CD8-positive, alpha-beta T cell (primary cell): ENCODE measurements at regions of chr22 and their contacts with region 1.

Region 1: DNA sequence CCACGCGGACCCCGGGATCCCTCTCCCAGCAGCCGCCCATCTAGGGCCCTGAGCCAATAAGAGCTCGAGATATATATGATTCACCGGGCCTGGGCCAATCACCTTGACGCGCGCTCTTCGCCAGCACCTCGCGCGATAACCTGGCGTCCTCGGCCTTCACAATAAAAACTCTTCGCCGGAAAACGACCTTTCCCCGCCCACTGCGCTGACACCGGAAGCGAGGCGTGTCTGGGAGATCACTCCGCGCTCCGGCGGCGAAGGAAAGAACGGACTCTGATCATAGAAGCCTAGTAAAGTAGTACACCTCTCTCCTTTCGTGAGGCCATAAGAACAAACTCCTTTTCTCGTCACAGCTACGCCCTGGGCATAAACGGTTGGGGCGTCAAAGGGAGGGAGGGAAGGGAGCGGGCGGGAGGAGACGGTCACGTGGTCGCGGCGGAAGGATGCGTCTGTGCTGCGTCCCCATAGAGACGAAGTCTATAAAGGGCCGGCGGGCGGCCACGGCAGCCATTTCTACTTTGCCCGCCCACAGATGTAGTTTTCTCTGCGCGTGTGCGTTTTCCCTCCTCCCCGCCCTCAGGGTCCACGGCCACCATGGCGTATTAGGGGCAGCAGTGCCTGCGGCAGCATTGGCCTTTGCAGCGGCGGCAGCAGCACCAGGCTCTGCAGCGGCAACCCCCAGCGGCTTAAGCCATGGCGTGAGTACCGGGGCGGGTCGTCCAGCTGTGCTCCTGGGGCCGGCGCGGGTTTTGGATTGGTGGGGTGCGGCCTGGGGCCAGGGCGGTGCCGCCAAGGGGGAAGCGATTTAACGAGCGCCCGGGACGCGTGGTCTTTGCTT is at the start of gene ATF4:
- DNase-seq: peak; percentile 93 to 99 (median 95)
- ATAC-seq: peak; percentile 89
- H3K4me3 ChIP-seq: peak within 1 kb of the TSS; percentile 98 to 99
- H3K4me3 Mint-ChIP-seq: peak within 1 kb of the TSS; percentile 98
- H3K27ac ChIP-seq: peak within 1 kb of the TSS; percentile 87 to 88
- H3K27ac Mint-ChIP-seq: peak within 1 kb of the TSS; percentile 99
- H3K4me1 ChIP-seq: peaks cover 48% of the 10 kb centered on the region
- H3K4me1 Mint-ChIP-seq: peaks cover 44% of the 10 kb centered on the region
- H3K27me3 ChIP-seq: no peaks in the 10 kb centered on the region
- H3K27me3 Mint-ChIP-seq: no peaks in the 10 kb centered on the region
- CTCF ChIP-seq: no peak
- total RNA-seq, gene ATF4: 327 to 329 TPM

Region 2: DNA sequence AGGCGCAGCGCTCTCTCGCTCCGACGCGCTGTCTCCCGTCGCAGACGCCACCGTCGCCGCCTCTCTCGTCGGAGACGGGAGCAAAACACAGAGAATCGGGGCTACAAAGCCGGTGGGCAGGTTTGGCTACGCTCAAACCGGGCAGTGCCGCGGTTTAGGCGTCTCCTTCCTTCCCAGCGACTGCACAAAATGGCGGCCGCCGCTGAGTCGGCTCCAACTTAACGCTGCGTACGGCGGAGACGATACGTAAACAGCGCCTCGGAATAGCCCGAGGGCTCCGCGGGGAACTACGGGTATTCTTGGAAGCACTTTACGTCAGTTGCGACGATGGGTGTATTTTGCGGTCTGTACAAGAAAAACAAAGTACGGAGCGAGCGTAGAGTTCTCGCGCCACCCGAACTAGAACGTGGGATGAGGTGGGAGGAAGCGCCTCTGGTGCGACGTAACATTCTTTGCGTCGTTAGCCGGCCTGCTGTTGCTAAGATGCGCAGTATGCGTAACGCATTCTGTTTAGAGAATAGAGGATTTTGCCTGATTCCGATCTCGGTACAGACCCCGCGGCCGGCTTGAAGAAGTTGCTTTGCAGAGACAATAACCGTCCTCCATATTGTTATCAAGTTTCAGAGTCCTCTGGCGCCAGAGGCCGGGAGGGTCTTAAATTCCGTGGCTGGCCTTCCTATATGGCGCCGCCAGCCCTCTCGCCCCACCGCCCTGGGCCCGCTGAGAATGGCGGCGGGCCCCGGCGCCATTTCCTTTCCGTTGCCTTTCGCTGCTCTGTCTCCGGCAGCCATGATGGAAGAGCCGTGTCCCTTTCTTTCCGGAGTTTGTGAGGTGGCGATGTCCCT is 1013.9 kb before region 1 on chr22 and contains the start of gene DDX17:
- CTCF ChIA-PET with region 1: no interaction called
- POLR2A ChIA-PET with region 1: interaction called, 4 read pairs
- intact Hi-C with region 1: loop called in 1 of 2 experiments (anchors 10 kb)
- DNase-seq: peak; percentile 91 to 99 (median 95)
- ATAC-seq: peak; percentile 89
- H3K4me3 ChIP-seq: peak within 1 kb of the TSS; percentile 83 to 91
- H3K4me3 Mint-ChIP-seq: peak within 1 kb of the TSS; percentile 98
- H3K27ac ChIP-seq: peak within 1 kb of the TSS; percentile 97 to 99
- H3K27ac Mint-ChIP-seq: peak within 1 kb of the TSS; percentile 100
- H3K4me1 ChIP-seq: peaks cover 38% of the 10 kb centered on the region
- H3K4me1 Mint-ChIP-seq: peaks cover 46% of the 10 kb centered on the region
- H3K27me3 ChIP-seq: no peaks in the 10 kb centered on the region
- H3K27me3 Mint-ChIP-seq: no peaks in the 10 kb centered on the region
- CTCF ChIP-seq: no peak
- total RNA-seq, gene DDX17: 348 to 386 TPM

Region 3: DNA sequence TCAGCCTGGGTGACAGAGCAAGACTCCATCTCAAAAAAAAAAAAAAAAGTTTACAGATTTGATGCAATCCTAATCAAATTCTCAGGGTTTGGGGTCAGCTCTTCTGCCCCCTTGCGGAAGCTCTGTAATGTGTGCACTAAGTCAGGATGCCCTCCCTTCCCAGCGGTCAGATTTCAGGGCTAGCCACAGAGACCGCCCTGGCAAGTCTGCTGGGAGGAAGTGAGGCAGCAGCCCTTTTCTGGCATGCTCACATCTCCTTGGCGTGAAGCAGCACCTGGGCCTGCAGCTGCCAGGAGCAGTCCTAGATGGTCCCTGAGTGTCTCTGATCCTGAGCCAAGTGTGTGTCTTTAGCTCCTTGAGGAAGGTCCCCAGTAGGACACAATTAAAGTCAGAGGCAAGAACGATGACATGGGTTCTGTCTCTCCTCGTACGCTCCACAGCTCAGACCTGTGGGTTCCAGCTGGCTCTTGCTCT is 517.1 kb before region 1 on chr22:
- CTCF ChIA-PET with region 1: no interaction called
- POLR2A ChIA-PET with region 1: no interaction called
- intact Hi-C with region 1: loop called in 1 of 2 experiments (anchors 10 kb)
- DNase-seq: peak; percentile 43 to 92 (median 76)
- ATAC-seq: peak; percentile 83
- H3K4me3 ChIP-seq: no peak overlapping the region
- H3K4me3 Mint-ChIP-seq: no peak overlapping the region
- H3K27ac ChIP-seq: no peak overlapping the region
- H3K27ac Mint-ChIP-seq: peak overlapping the region; percentile 27
- H3K4me1 ChIP-seq: peaks cover 10% of the 10 kb centered on the region
- H3K4me1 Mint-ChIP-seq: peaks cover 12% of the 10 kb centered on the region
- H3K27me3 ChIP-seq: no peaks in the 10 kb centered on the region
- H3K27me3 Mint-ChIP-seq: peaks cover under 1% of the 10 kb centered on the region
- CTCF ChIP-seq: peak; percentile 68

Region 4: DNA sequence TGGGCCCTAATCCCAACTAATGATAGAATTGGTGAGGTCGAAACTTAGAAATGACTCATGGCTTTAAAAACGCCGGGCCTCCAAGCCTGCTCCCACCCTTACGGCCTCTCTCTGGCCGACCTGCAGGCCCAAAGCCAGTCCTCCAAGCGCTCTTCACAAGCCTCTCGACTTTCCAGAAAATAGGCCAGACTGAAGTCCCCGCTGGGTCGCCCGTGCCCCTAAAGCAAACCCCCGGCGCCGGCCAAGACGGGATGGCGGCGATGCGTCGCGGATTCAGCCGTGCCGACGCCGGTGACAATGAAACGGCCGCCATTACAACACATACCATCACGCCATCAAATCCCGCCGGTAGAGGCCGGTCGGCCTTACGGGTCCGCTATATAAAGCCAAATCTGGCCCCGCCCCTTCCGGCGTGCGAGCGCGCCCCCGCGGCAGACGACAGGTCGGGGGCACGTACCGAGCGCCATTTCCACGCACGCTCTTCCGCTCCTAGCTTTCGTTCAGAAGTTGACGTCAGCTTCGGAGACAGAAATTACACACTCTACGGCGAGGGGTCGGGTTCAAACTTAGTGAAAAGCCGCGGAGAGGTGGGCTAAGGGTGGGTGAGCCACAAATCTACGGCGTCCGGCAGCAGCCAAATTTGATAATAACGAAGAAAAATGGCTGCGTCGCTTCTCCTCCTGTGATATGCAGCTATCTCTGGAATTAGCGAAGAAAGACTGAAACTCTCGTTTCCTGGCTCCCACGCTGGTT is 200.8 kb before region 1 on chr22 and contains the start of gene RPL3:
- CTCF ChIA-PET with region 1: no interaction called
- POLR2A ChIA-PET with region 1: interaction called, 17 read pairs
- intact Hi-C with region 1: loop called (anchors 1 kb)
- DNase-seq: peak; percentile 96 to 100 (median 98)
- ATAC-seq: peak; percentile 85
- H3K4me3 ChIP-seq: peak within 1 kb of the TSS; percentile 91 to 99
- H3K4me3 Mint-ChIP-seq: peak within 1 kb of the TSS; percentile 96
- H3K27ac ChIP-seq: peak within 1 kb of the TSS; percentile 81 to 90
- H3K27ac Mint-ChIP-seq: peak within 1 kb of the TSS; percentile 96
- H3K4me1 ChIP-seq: peaks cover 45% of the 10 kb centered on the region
- H3K4me1 Mint-ChIP-seq: peaks cover 46% of the 10 kb centered on the region
- H3K27me3 ChIP-seq: no peaks in the 10 kb centered on the region
- H3K27me3 Mint-ChIP-seq: no peaks in the 10 kb centered on the region
- CTCF ChIP-seq: no peak
- total RNA-seq, gene RPL3: 3,777 to 3,874 TPM

Region 5: GRCh38 chr22:39414886-39415285 is 105.4 kb before region 1 on chr22:
- CTCF ChIA-PET with region 1: interaction called, 3 read pairs
- POLR2A ChIA-PET with region 1: interaction called, 3 read pairs
- intact Hi-C with region 1: loop called in 1 of 2 experiments (anchors 5 kb)
- DNase-seq: no peak
- ATAC-seq: no peak
- H3K4me3 ChIP-seq: peak overlapping the region; percentile 0 to 17
- H3K4me3 Mint-ChIP-seq: peak overlapping the region; percentile 63
- H3K27ac ChIP-seq: no peak overlapping the region
- H3K27ac Mint-ChIP-seq: peak overlapping the region; percentile 75
- H3K4me1 ChIP-seq: peaks cover 68% of the 10 kb centered on the region
- H3K4me1 Mint-ChIP-seq: peaks cover 62% of the 10 kb centered on the region
- H3K27me3 ChIP-seq: no peaks in the 10 kb centered on the region
- H3K27me3 Mint-ChIP-seq: no peaks in the 10 kb centered on the region
- CTCF ChIP-seq: no peak

Region 6: GRCh38 chr22:39502109-39502788 is 18.0 kb before region 1 on chr22 and contains the start of gene MIEF1:
- CTCF ChIA-PET with region 1: interaction called, 287 read pairs
- POLR2A ChIA-PET with region 1: interaction called, 20 read pairs
- intact Hi-C with region 1: loop called (anchors 1 kb)
- DNase-seq: peak; percentile 67 to 96 (median 88)
- ATAC-seq: peak; percentile 94
- H3K4me3 ChIP-seq: peak within 1 kb of the TSS; percentile 66 to 80
- H3K4me3 Mint-ChIP-seq: peak within 1 kb of the TSS; percentile 97
- H3K27ac ChIP-seq: peak within 1 kb of the TSS; percentile 64 to 80
- H3K27ac Mint-ChIP-seq: peak within 1 kb of the TSS; percentile 92
- H3K4me1 ChIP-seq: peaks cover 30% of the 10 kb centered on the region
- H3K4me1 Mint-ChIP-seq: peaks cover 41% of the 10 kb centered on the region
- H3K27me3 ChIP-seq: no peaks in the 10 kb centered on the region
- H3K27me3 Mint-ChIP-seq: no peaks in the 10 kb centered on the region
- CTCF ChIP-seq: no peak
- total RNA-seq, gene MIEF1: 24.8 to 25.3 TPM

Region 7: DNA sequence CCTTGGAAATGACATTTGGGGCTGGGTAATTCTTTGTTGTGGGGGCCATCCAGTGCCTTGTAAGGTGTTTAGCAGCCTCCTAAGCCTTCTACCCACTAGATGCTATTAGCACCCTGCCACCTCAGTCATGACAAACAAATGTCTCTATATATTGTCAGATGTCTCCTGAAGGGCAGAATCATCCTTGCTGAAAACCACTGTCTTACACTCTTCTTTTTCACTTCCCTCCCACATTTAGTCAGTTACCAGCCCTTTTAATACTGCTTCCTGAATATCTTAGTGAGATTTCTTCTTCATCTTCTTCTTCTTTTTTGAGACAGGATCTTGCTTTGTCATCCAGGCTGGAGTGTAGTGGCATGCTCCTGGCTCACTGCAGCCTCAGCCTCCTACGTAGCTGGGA is 690.5 kb after region 1 on chr22:
- CTCF ChIA-PET with region 1: no interaction called
- POLR2A ChIA-PET with region 1: no interaction called
- intact Hi-C with region 1: no loop called
- DNase-seq: peak in 1 of 9 experiments; percentile 26
- ATAC-seq: peak; percentile 51
- H3K4me3 ChIP-seq: no peak overlapping the region
- H3K4me3 Mint-ChIP-seq: peak overlapping the region; percentile 1
- H3K27ac ChIP-seq: peak overlapping the region in 1 of 2 experiments; percentile 8
- H3K27ac Mint-ChIP-seq: peak overlapping the region; percentile 83
- H3K4me1 ChIP-seq: peaks cover 59% of the 10 kb centered on the region
- H3K4me1 Mint-ChIP-seq: peaks cover 76% of the 10 kb centered on the region
- H3K27me3 ChIP-seq: no peaks in the 10 kb centered on the region
- H3K27me3 Mint-ChIP-seq: no peaks in the 10 kb centered on the region
- CTCF ChIP-seq: no peak

Region 8: DNA sequence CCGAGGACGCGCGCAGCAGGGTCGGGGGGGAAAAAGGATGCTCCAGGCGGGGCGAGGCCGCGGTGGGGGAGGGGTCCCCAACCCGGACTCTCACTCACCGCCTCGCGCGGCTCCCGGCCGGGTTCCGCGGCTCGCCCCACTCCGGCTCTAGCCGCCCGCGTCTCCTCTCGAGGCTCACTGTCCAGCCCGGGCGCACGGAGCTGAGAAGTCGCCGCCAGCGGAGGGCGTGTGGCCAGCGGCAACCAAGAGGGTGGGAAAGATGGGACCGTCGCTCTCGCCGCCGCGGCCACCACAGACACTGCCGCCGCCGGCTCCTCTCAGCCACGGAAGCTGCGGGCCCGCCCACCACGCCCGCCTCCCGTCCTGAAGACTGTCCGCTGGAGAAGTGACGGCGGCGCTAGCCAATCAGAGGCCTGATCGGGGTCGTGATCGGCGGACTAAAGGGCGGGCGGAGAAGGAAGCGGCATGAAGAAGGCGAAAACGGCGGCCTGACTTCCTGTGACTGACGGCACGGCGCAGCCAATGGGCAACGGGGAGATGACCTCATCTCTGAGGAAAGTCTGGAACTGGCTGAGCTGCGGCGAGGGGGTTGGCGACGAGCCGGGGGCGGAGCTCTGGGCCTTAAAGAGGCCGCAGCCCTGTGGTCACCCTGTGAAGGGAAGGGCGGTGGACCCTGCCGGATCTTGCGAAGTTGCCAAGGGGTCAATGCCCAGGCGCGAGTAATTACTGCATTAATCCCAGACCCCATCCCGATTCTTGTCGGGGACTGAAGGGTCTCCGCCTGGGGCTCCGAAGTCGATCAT is 1116.3 kb after region 1 on chr22 and contains the start of gene MRTFA:
- CTCF ChIA-PET with region 1: no interaction called
- POLR2A ChIA-PET with region 1: no interaction called
- intact Hi-C with region 1: loop called in 1 of 2 experiments (anchors 5 kb)
- DNase-seq: peak; percentile 98 to 100 (median 99)
- ATAC-seq: peak; percentile 93
- H3K4me3 ChIP-seq: peak within 1 kb of the TSS; percentile 98 to 100
- H3K4me3 Mint-ChIP-seq: peak within 1 kb of the TSS; percentile 99
- H3K27ac ChIP-seq: peak within 1 kb of the TSS; percentile 89
- H3K27ac Mint-ChIP-seq: peak within 1 kb of the TSS; percentile 98
- H3K4me1 ChIP-seq: peaks cover 34% of the 10 kb centered on the region
- H3K4me1 Mint-ChIP-seq: peaks cover 45% of the 10 kb centered on the region
- H3K27me3 ChIP-seq: no peaks in the 10 kb centered on the region
- H3K27me3 Mint-ChIP-seq: no peaks in the 10 kb centered on the region
- CTCF ChIP-seq: no peak
- total RNA-seq, gene MRTFA: 53.7 to 56.7 TPM